B cell (primary cell): ENCODE measurements at regions of chr16 and their contacts with region 1.

Region 1: GRCh38 chr16:71883849-71884638 is at the start of gene ZNF821:
- DNase-seq: peak; percentile 89
- ATAC-seq: peak; percentile 69
- H3K4me3 ChIP-seq: peak within 1 kb of the TSS; percentile 76 to 98 (median 86)
- H3K4me3 Mint-ChIP-seq: peak within 1 kb of the TSS; percentile 96
- H3K27ac ChIP-seq: peak within 1 kb of the TSS; percentile 89 to 91
- H3K27ac Mint-ChIP-seq: peak within 1 kb of the TSS; percentile 96
- H3K4me1 ChIP-seq: peaks cover 33 to 43% of the 10 kb centered on the region in 2 donors
- H3K4me1 Mint-ChIP-seq: peaks cover 43% of the 10 kb centered on the region
- H3K27me3 ChIP-seq: no peaks in the 10 kb centered on the region
- H3K27me3 Mint-ChIP-seq: no peaks in the 10 kb centered on the region
- CTCF ChIP-seq: peak; percentile 66
- total RNA-seq, gene ZNF821: 31.2 and 35.6 TPM in 2 replicates

Region 2: GRCh38 chr16:71808593-71809459 is 75.2 kb before region 1 on chr16 and contains the start of gene AP1G1:
- CTCF ChIA-PET with region 1: interaction called, 37 read pairs
- POLR2A ChIA-PET with region 1: interaction called, 47 read pairs
- intact Hi-C with region 1: loop called (anchors 1 kb)
- DNase-seq: peak; percentile 99
- ATAC-seq: peak; percentile 89
- H3K4me3 ChIP-seq: peak within 1 kb of the TSS; percentile 87 to 99 (median 96)
- H3K4me3 Mint-ChIP-seq: peak within 1 kb of the TSS; percentile 99
- H3K27ac ChIP-seq: peak within 1 kb of the TSS; percentile 96 to 99
- H3K27ac Mint-ChIP-seq: peak within 1 kb of the TSS; percentile 100
- H3K4me1 ChIP-seq: peaks cover 20 to 27% of the 10 kb centered on the region in 2 donors
- H3K4me1 Mint-ChIP-seq: peaks cover 30% of the 10 kb centered on the region
- H3K27me3 ChIP-seq: no peaks in the 10 kb centered on the region
- H3K27me3 Mint-ChIP-seq: no peaks in the 10 kb centered on the region
- CTCF ChIP-seq: no peak
- total RNA-seq, gene AP1G1: 142 and 159 TPM in 2 replicates

Region 3: DNA sequence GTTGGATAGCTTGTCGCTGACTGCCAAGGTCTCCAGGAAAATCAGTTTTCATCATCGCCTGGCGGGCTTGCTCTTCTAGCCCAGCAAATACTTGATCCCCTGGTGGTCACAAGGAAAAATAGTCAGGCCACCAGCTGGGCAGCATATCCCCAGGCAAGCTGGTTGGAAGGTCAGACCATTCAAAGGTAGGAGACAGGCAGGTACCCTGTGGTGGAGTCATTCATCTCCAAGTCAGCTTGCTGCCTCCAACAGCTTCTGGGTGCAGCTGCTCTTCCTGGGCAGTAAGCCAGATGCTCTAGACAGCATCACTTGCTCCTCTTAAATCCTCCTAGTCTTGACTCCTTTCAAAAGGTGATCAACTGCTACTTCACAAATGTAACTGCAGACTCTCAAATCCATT is 16.1 kb before region 1 on chr16:
- CTCF ChIA-PET with region 1: interaction called, 15 read pairs
- POLR2A ChIA-PET with region 1: no interaction called
- intact Hi-C with region 1: no loop called
- DNase-seq: no peak
- ATAC-seq: no peak
- H3K4me3 ChIP-seq: no peak overlapping the region
- H3K4me3 Mint-ChIP-seq: no peak overlapping the region
- H3K27ac ChIP-seq: no peak overlapping the region
- H3K27ac Mint-ChIP-seq: no peak overlapping the region
- H3K4me1 ChIP-seq: no peaks in the 10 kb centered on the region
- H3K4me1 Mint-ChIP-seq: peaks cover 3% of the 10 kb centered on the region
- H3K27me3 ChIP-seq: no peaks in the 10 kb centered on the region
- H3K27me3 Mint-ChIP-seq: no peaks in the 10 kb centered on the region
- CTCF ChIP-seq: no peak

Region 4: DNA sequence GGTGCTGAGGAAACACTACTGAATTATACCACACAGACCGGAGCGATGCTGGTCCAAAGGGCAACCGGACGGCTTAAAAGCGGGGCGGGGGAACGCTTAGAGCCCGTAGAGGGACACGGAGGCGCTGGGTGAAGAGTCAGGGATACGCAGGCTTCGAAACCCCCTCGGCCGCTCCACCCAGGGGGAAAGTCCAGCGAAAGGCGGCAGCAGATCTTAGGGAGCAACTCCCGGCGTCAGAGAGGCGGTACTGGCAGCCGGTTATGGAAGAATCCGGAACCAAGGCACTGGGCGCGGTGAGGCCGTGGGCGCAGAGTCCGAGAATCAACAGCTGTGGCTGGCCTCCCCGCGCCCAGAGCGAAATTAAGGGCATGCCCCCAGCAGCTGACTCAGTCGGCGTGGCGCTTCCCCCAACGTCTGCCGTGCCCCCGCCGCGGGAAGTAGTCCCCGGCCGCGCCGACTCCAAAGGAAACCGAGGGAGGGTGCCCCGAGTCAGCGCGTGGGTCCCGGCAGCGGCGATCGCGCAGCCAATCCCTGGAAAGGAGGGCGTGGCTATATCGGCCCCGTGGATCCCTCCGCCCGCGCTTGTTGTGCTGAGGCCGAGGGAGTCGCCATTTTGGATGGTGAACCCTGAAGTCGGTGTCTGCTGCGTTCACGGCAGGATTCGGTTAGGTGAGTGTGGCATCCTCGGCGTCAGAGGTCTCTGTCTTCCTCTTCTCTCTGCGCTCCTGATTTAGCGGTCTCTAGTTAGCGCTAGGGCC is 11.1 kb after region 1 on chr16 and contains the start of gene IST1:
- CTCF ChIA-PET with region 1: interaction called, 69 read pairs
- POLR2A ChIA-PET with region 1: interaction called, 37 read pairs
- intact Hi-C with region 1: loop called (anchors 1 kb)
- DNase-seq: peak; percentile 98
- ATAC-seq: peak; percentile 91
- H3K4me3 ChIP-seq: peak within 1 kb of the TSS; percentile 93 to 100 (median 99)
- H3K4me3 Mint-ChIP-seq: peak within 1 kb of the TSS; percentile 97
- H3K27ac ChIP-seq: peak within 1 kb of the TSS; percentile 83 to 88
- H3K27ac Mint-ChIP-seq: peak within 1 kb of the TSS; percentile 98
- H3K4me1 ChIP-seq: peaks cover 16 to 39% of the 10 kb centered on the region in 2 donors
- H3K4me1 Mint-ChIP-seq: peaks cover 22% of the 10 kb centered on the region
- H3K27me3 ChIP-seq: no peaks in the 10 kb centered on the region
- H3K27me3 Mint-ChIP-seq: no peaks in the 10 kb centered on the region
- CTCF ChIP-seq: no peak
- total RNA-seq, gene IST1: 268 and 302 TPM in 2 replicates

Region 5: DNA sequence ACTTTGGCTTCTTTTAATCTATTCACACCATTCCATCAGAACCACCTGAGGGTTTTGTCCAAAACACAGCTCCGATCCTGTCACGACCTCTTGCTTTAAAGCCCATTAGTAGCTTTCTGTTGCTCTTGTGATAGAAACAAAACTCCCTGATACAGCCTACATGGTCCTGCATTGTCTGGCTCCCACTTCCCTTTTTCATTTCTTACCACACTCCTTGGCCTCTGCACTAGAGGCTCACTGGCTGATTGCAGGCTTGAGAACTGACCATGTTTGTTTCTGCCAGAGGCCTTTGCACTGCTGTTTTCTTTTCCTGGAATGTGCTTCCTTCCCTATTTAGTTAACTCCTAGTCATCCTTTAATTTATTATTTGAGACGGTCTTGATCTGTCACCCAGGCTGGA is 35.0 kb after region 1 on chr16:
- CTCF ChIA-PET with region 1: interaction called, 10 read pairs
- POLR2A ChIA-PET with region 1: interaction called, 6 read pairs
- intact Hi-C with region 1: no loop called
- DNase-seq: peak; percentile 34
- ATAC-seq: peak; percentile 51
- H3K4me3 ChIP-seq: no peak overlapping the region
- H3K4me3 Mint-ChIP-seq: no peak overlapping the region
- H3K27ac ChIP-seq: peak overlapping the region in 1 of 2 donors; percentile 37
- H3K27ac Mint-ChIP-seq: no peak overlapping the region
- H3K4me1 ChIP-seq: peaks cover 3 to 4% of the 10 kb centered on the region in 2 donors
- H3K4me1 Mint-ChIP-seq: peaks cover 25% of the 10 kb centered on the region
- H3K27me3 ChIP-seq: no peaks in the 10 kb centered on the region
- H3K27me3 Mint-ChIP-seq: no peaks in the 10 kb centered on the region
- CTCF ChIP-seq: no peak

Region 6: GRCh38 chr16:72008424-72009216 is 124.6 kb after region 1 on chr16 and contains the start of gene DHODH:
- CTCF ChIA-PET with region 1: no interaction called
- POLR2A ChIA-PET with region 1: interaction called, 6 read pairs
- intact Hi-C with region 1: loop called (anchors 5 kb)
- DNase-seq: peak; percentile 99
- ATAC-seq: peak; percentile 98
- H3K4me3 ChIP-seq: peak within 1 kb of the TSS; percentile 56 to 96 (median 66)
- H3K4me3 Mint-ChIP-seq: peak within 1 kb of the TSS; percentile 95
- H3K27ac ChIP-seq: peak within 1 kb of the TSS; percentile 73 to 85
- H3K27ac Mint-ChIP-seq: peak within 1 kb of the TSS; percentile 94
- H3K4me1 ChIP-seq: peaks cover 0 to 12% of the 10 kb centered on the region in 2 donors
- H3K4me1 Mint-ChIP-seq: peaks cover 16% of the 10 kb centered on the region
- H3K27me3 ChIP-seq: no peaks in the 10 kb centered on the region
- H3K27me3 Mint-ChIP-seq: peaks cover 4% of the 10 kb centered on the region
- CTCF ChIP-seq: no peak
- total RNA-seq, gene DHODH: 11.3 and 14.7 TPM in 2 replicates